B cell (primary cell): ENCODE measurements at regions of chr21 and their contacts with region 1.

Region 1: GRCh38 chr21:36542312-36543107 is 62.6 kb upstream of the CLDN14 start:
- DNase-seq: peak; percentile 28
- ATAC-seq: peak; percentile 41
- H3K4me3 ChIP-seq: no peak overlapping the region
- H3K4me3 Mint-ChIP-seq: no peak overlapping the region
- H3K27ac ChIP-seq: no peak overlapping the region
- H3K27ac Mint-ChIP-seq: no peak overlapping the region
- H3K4me1 ChIP-seq: peaks cover 0 to 8% of the 10 kb centered on the region in 2 donors
- H3K4me1 Mint-ChIP-seq: peaks cover 3% of the 10 kb centered on the region
- H3K27me3 ChIP-seq: peaks cover 0 to 8% (median 3%) of the 10 kb centered on the region in 4 experiments
- H3K27me3 Mint-ChIP-seq: peaks cover 17% of the 10 kb centered on the region
- CTCF ChIP-seq: no peak

Region 2: GRCh38 chr21:35896060-35896459 is 646.5 kb before region 1 on chr21:
- CTCF ChIA-PET with region 1: no interaction called
- POLR2A ChIA-PET with region 1: no interaction called
- intact Hi-C with region 1: no loop called
- DNase-seq: no peak
- ATAC-seq: no peak
- H3K4me3 ChIP-seq: no peak overlapping the region
- H3K4me3 Mint-ChIP-seq: no peak overlapping the region
- H3K27ac ChIP-seq: no peak overlapping the region
- H3K27ac Mint-ChIP-seq: no peak overlapping the region
- H3K4me1 ChIP-seq: peaks cover 0 to 10% of the 10 kb centered on the region in 2 donors
- H3K4me1 Mint-ChIP-seq: peaks cover 10% of the 10 kb centered on the region
- H3K27me3 ChIP-seq: peaks cover 0 to 6% (median 2%) of the 10 kb centered on the region in 4 experiments
- H3K27me3 Mint-ChIP-seq: peaks cover 19% of the 10 kb centered on the region
- CTCF ChIP-seq: no peak

Region 3: DNA sequence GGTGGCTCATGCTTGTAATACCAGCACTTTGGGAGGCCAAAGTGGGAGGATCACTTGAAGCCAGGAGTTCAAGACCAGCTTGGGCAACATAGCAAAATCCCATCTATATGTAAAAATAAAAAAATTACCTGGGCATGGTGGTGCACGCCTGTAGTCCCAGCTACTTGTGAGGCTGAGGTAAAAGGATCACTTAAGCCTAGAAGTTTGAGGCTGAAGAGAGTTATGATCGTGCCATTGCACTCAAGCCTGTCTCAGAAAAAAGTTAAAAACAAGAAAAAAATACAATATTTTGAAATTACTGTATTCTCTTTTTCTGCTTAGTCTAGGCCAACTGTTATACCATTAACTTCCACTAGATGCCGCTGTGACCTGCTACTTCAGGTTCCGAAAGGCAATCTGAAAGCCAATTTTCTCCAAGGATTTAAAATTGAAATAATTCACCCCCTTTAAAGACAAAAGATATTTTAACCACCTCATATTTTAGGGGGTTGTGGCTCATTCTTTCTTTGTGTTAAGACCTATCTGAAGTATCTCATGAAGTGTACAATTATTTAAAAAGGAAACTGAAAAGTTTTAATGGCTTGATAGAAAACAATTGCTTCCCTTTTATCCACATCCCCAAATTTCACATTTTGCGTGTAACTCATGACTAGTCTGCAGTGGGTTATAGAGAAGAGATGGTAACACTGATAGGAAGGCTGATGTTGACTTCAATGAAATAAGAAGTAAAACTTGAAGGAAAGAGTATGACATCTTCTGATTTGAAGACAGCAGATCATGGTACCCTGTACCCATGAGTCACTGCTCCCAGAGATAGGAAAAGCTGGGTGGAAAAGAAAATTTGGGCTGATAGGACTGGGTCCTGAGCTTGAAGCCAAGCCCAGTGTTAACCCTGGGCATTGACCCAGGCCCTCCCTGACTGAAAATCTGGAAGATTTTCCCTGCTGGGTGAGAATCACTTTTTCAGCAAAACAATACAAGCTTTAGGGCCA is 38.1 kb before region 1 on chr21:
- CTCF ChIA-PET with region 1: no interaction called
- POLR2A ChIA-PET with region 1: no interaction called
- intact Hi-C with region 1: loop called (anchors 1 kb)
- DNase-seq: peak; percentile 58
- ATAC-seq: no peak
- H3K4me3 ChIP-seq: no peak overlapping the region
- H3K4me3 Mint-ChIP-seq: no peak overlapping the region
- H3K27ac ChIP-seq: no peak overlapping the region
- H3K27ac Mint-ChIP-seq: no peak overlapping the region
- H3K4me1 ChIP-seq: no peaks in the 10 kb centered on the region
- H3K4me1 Mint-ChIP-seq: no peaks in the 10 kb centered on the region
- H3K27me3 ChIP-seq: peaks cover 0 to 5% (median 0%) of the 10 kb centered on the region in 4 experiments
- H3K27me3 Mint-ChIP-seq: peaks cover 4% of the 10 kb centered on the region
- CTCF ChIP-seq: peak; percentile 99